Endothelial cell of umbilical vein (primary cell): ENCODE measurements at regions of chr1 and their contacts with region 1.

Region 1: GRCh38 chr1:1406817-1407635 is at the start of gene MRPL20:
- DNase-seq: peak; percentile 88
- H3K4me3 ChIP-seq: peak within 1 kb of the TSS; percentile 73 to 87 (median 86)
- H3K27ac ChIP-seq: peak within 1 kb of the TSS; percentile 54
- H3K4me1 ChIP-seq: peaks cover 11% of the 10 kb centered on the region
- H3K27me3 ChIP-seq: no peaks in the 10 kb centered on the region
- CTCF ChIP-seq: no peak
- POLR2A ChIP-seq: peak; percentile 89
- total RNA-seq, gene MRPL20: 125 and 134 TPM in 2 replicates

Region 2: GRCh38 chr1:1305300-1306069 is 101.5 kb before region 1 on chr1:
- CTCF ChIA-PET with region 1: no interaction called
- POLR2A ChIA-PET with region 1: no interaction called
- dilution Hi-C with region 1: no loop called
- intact Hi-C with region 1: no loop called
- DNase-seq: peak; percentile 21
- H3K4me3 ChIP-seq: no peak overlapping the region
- H3K27ac ChIP-seq: no peak overlapping the region
- H3K4me1 ChIP-seq: peaks cover 15% of the 10 kb centered on the region
- H3K27me3 ChIP-seq: no peaks in the 10 kb centered on the region
- CTCF ChIP-seq: no peak
- POLR2A ChIP-seq: no peak

Region 3: DNA sequence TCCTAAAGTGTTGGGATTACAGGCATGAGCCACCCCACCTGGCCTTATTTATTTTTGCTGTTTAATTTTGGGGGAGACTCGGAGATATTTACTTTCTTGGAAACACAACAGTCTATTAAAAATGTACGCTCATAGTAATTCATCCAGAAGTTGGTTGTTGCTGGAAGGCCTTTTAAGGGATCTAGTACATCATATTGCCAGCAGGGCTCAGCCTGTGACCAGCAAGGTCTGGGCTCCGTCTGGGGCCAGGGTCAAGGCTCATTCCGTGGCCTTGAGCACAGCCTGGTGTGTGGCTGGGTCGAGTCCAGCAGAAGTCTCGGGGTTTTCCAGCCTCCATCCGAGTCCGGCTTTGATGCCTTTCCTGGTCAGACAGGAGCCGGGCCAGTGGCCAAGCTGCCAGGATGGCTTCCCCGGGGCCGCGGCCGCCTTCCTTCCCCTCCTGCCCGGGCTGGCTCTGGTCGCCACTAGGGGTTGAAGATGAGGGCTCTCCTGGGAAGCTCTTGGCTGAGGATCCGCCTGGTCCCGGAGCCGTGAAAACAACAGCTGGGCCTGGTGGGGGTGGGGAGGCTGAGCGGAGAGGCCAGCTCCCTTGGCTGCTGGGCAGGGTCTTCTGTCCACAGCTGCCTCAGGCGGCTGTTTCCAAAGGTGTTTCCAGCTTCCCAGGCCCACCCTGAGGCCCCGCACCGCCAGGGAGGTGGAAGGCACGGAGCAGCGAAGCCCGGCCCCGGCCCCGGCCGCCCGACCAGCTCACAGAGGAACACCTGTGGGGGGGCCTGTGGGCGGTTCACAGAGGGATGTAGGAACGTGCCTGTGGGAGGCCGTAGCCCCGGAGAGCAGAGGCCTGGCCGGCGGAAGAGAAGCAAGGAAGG is 23.3 kb after region 1 on chr1:
- CTCF ChIA-PET with region 1: interaction called, 7 read pairs
- POLR2A ChIA-PET with region 1: interaction called, 6 read pairs
- dilution Hi-C with region 1: no loop called
- intact Hi-C with region 1: loop called (anchors 1 kb)
- DNase-seq: peak; percentile 91
- H3K4me3 ChIP-seq: no peak overlapping the region
- H3K27ac ChIP-seq: peak overlapping the region; percentile 43
- H3K4me1 ChIP-seq: peaks cover 17% of the 10 kb centered on the region
- H3K27me3 ChIP-seq: no peaks in the 10 kb centered on the region
- CTCF ChIP-seq: peak; percentile 29 to 51
- POLR2A ChIP-seq: no peak

Region 4: DNA sequence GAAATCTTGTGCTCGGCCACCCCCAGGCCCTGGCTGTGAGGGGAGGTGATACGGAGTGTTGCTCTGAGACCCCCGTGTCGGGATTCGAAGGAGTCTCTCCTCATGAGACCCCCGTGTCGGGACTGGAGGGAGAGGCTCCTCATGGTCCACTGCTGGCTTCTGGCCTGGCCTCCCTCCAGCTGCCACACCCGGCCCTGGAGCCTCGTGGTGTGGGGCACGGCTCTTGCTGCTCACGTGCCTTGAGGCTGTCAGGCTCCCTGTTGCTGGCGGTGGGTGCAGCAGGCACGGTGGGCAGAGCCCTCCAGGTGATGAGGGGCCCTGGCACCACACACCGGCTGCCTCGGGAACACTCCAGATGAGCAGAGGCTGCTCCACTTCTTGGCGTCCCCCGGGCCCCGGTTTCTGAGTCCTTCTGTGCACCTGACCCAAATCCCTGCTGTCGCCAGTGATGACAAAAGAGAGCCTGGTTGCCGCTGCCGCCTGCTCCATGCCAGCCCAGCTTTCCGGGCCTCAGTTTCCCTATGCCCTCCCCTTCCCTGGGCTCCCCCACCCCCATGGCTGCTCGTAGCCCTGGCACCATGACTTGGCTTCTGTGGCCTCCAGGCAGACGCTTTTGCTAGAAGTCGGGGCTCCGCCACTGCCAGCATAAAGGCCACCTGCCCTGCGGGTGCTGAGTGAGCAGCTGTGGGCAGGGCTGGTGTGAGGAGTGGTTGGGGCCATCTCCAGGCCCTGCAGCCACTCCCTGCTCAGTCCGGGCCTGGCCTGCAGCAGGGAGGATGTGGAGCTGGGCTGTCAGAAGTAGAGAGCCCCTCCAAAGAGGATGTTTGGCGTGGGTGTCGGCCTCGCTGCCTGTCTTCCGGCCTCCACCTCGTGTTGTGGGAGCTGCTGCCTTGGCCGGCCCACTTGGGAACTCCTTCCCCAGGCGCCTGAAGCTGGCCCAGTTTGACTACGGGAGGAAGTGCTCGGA is 121.6 kb after region 1 on chr1:
- CTCF ChIA-PET with region 1: no interaction called
- POLR2A ChIA-PET with region 1: no interaction called
- dilution Hi-C with region 1: no loop called
- intact Hi-C with region 1: no loop called
- DNase-seq: no peak
- H3K4me3 ChIP-seq: no peak overlapping the region
- H3K27ac ChIP-seq: no peak overlapping the region
- H3K4me1 ChIP-seq: no peaks in the 10 kb centered on the region
- H3K27me3 ChIP-seq: no peaks in the 10 kb centered on the region
- CTCF ChIP-seq: no peak
- POLR2A ChIP-seq: no peak